ENCODE measurements at regions of chr22 and their contacts with region 1.

Region 1: DNA sequence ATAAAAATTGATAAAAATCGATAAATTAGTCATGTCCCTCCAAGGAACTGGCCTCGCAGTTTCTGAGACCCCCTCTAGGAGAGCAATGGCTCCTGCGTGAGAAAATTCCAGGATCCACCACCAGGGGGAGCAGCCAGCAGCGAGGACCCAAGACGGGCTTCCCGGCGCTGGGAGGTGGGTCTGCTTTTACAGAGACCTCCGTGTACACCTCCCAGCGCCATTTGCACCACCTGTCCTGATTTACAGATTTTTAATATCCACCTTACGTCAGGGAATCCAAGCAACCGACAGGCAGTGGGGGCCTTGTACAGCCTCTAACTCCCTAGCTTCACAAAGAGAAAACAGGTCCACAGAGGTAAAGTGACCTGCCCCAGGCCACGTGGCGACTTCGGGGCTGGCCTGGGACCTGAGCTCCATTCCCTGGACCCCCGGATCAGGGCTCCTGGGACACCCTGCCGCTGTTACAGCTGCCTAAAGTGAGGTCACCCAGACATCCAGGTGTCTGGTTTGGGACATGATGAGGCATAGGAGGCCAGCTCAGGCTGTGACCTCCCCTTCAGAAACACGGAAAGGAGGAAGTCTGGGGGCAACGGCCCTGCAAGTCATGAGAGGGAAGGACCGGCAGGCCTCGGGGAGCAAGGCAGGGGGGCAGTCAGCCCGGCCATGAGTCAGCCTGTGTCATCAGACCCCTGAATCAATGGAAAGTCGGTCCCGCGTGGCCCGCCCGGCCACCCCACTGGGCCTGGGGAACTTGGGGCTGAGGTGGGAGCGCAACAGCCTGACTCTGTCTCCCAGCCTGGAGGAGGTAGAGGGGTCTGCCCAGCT is 3.5 kb downstream of the OSM start:
- DNase-seq: peak; percentile 87
- ATAC-seq: no peak
- H3K4me3 Mint-ChIP-seq: peak overlapping the region; percentile 96
- H3K27ac Mint-ChIP-seq: peak overlapping the region; percentile 97
- H3K4me1 Mint-ChIP-seq: peaks cover 61% of the 10 kb centered on the region
- H3K27me3 Mint-ChIP-seq: no peaks in the 10 kb centered on the region

Region 2: GRCh38 chr22:30277547-30278344 is 14.6 kb after region 1 on chr22:
- CTCF ChIA-PET with region 1: interaction called, 59 read pairs
- POLR2A ChIA-PET with region 1: interaction called, 12 read pairs
- DNase-seq: no peak
- ATAC-seq: no peak
- H3K4me3 Mint-ChIP-seq: no peak overlapping the region
- H3K27ac Mint-ChIP-seq: peak overlapping the region; percentile 48
- H3K4me1 Mint-ChIP-seq: peaks cover 66% of the 10 kb centered on the region
- H3K27me3 Mint-ChIP-seq: peaks cover 1% of the 10 kb centered on the region

Region 3: DNA sequence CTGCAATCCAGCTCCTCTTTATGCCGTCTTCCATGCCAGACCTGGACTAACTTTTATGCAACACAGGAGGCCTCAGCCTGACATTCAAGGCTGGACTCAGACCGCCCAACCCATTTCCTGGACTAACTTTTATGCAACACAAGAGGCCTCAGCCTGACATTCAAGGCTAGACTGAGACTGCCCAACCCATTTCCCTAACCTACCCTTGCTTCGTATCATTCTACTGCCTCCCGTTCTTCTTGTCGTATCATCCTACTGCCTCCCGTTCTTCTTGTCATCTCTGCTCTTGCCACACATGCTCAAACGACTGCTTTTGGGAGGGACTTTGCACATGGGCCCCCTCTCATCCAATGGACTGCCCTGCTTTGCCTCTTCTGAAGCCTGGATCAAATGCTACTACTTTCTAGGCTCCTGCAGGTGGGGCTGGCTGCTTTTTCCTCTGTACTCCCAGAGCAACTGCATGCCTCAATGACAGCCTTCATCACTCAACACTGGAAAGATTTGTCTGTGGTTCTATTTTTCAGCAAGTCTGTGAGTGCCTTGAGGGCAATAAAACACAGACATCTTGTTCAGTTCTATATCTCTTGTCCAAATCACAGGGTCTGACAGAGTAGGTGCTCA is 55.8 kb after region 1 on chr22:
- CTCF ChIA-PET with region 1: no interaction called
- POLR2A ChIA-PET with region 1: no interaction called
- DNase-seq: no peak
- ATAC-seq: no peak
- H3K4me3 Mint-ChIP-seq: no peak overlapping the region
- H3K27ac Mint-ChIP-seq: peak overlapping the region; percentile 12
- H3K4me1 Mint-ChIP-seq: peaks cover 86% of the 10 kb centered on the region
- H3K27me3 Mint-ChIP-seq: no peaks in the 10 kb centered on the region

Measured in activated CD8-positive, alpha-beta T cell treated with anti-CD3 and anti-CD28 coated beads, Interleukin-2, amount 10 ng/mL, durations not matched to agents 7 days and 5 days (primary cell).